ENCODE measurements at regions of chr6 and their contacts with region 1.

Region 1: DNA sequence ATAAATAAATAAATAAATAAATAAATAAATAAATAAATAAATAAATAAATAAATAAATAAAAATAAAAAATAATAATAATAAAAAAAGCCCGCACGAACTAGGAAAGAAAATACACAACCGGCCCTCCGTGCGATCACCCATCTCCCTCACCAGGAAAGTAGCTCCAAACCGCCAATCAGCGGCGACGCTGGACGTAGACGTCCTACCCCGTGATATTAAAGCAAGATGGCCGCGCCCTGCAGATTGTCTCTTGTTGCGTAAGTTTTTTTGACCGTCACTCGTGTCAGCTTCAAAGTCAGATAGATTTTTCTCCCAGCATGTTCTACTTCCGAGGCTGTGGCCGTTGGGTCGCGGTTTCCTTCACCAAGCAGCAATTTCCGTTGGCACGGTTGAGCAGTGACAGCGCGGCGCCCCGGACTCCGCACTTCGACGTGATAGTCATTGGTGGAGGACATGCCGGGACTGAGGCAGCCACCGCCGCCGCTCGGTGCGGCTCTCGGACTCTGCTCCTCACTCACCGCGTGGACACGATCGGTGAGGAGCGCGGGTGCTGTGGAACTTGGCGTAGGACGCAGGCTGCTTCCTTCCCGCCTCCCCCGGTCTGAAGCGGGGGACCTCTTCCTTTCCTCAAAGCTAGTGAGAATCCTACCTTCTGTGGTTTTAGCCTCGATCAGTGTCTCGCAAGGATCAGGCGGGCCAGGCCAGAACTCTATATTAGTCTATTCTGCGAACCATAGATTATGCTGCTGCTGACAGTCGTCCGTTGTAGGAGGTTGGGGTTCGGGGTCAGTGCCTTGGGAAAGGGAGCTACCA is at the start of gene MTO1:
- DNase-seq: peak; percentile 72 to 95 (median 80)
- ATAC-seq: peak; percentile 91
- H3K4me3 ChIP-seq: peak within 1 kb of the TSS; percentile 81
- H3K4me3 Mint-ChIP-seq: peak within 1 kb of the TSS; percentile 98
- H3K27ac ChIP-seq: peak within 1 kb of the TSS; percentile 88 to 95
- H3K27ac Mint-ChIP-seq: peak within 1 kb of the TSS; percentile 95
- H3K4me1 ChIP-seq: peaks cover 53% of the 10 kb centered on the region
- H3K4me1 Mint-ChIP-seq: peaks cover 47% of the 10 kb centered on the region
- H3K27me3 ChIP-seq: no peaks in the 10 kb centered on the region
- H3K27me3 Mint-ChIP-seq: no peaks in the 10 kb centered on the region
- CTCF ChIP-seq: no peak
- total RNA-seq, gene MTO1: 47.9 to 48.0 TPM

Region 2: DNA sequence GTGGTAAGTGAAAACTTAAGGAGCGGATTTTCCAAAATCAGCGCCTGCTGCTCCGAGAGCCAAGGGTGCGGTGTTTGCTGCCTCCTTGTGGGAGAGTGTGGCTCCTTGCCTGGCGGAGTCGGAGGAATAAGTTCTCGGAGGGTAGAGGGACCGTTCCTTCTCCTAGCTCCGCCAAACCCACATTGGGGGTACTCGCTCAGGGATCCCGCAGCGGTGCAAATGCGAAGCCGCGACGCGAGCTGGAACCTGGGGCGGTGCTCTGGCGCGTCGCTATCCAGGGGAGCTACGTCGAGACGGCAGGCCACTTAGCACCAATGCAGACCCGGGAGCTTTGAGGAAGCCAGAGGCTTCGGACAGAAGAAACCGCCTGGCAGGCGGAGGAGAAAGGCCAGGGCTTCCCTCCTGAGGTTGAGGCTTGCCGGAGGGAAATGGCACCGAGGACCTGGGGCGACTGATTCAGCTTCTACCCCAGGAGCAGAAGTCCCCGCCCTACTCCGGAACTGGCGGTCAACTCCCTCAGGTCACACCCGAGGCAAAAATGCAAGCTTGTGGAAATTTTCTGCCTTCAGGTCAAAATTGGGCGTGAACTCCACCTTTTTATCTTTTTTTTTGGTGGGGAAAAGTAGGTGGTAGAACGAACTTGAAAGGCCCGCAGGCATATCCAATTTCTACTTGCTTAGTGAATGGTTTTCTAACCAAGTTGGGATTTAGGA is 72.8 kb before region 1 on chr6:
- CTCF ChIA-PET with region 1: no interaction called
- POLR2A ChIA-PET with region 1: interaction called, 16 read pairs
- intact Hi-C with region 1: no loop called
- DNase-seq: peak in 13 of 14 experiments; percentile 11 to 81 (median 41)
- ATAC-seq: peak; percentile 71
- H3K4me3 ChIP-seq: peak overlapping the region; percentile 71
- H3K4me3 Mint-ChIP-seq: peak overlapping the region; percentile 82
- H3K27ac ChIP-seq: peak overlapping the region in 1 of 2 donors; percentile 59
- H3K27ac Mint-ChIP-seq: peak overlapping the region; percentile 77
- H3K4me1 ChIP-seq: peaks cover 23% of the 10 kb centered on the region
- H3K4me1 Mint-ChIP-seq: peaks cover 19% of the 10 kb centered on the region
- H3K27me3 ChIP-seq: no peaks in the 10 kb centered on the region
- H3K27me3 Mint-ChIP-seq: no peaks in the 10 kb centered on the region
- CTCF ChIP-seq: peak; percentile 48

Region 3: DNA sequence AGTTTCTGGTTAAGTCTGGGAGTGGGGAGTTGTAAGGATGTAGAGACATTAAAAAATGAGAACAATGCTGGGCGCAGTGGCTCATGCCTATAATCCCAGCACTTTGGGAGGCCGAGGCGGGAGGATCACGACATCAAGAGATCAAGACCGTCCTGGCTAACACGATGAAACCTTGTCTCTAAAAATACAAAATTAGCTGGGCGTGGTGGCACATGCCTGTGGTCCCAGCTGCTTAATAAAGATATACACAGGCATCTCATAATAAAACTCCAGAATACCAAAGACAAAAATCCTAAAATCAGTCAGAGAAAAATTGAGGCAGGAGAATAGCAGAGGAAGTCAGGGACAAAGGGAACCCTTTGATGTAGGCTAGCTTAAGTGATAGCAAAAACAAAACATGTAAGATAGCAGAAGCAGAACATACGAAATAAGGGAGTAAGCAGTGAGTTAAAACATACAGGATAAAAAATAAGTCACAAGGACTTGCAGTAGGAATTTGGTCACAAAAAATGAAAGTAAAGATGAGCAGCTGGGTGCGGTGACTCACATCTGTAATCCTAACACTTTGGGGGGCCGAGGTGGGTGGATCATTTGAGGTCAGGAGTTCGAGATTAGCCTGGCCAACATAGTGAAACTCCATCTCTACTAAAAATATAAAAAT is 43.5 kb before region 1 on chr6:
- CTCF ChIA-PET with region 1: no interaction called
- POLR2A ChIA-PET with region 1: interaction called, 13 read pairs
- intact Hi-C with region 1: no loop called
- DNase-seq: peak in 1 of 14 experiments; percentile 18
- ATAC-seq: no peak
- H3K4me3 ChIP-seq: no peak overlapping the region
- H3K4me3 Mint-ChIP-seq: no peak overlapping the region
- H3K27ac ChIP-seq: no peak overlapping the region
- H3K27ac Mint-ChIP-seq: peak overlapping the region; percentile 29
- H3K4me1 ChIP-seq: peaks cover 19% of the 10 kb centered on the region
- H3K4me1 Mint-ChIP-seq: peaks cover 20% of the 10 kb centered on the region
- H3K27me3 ChIP-seq: no peaks in the 10 kb centered on the region
- H3K27me3 Mint-ChIP-seq: no peaks in the 10 kb centered on the region
- CTCF ChIP-seq: no peak

Region 4: DNA sequence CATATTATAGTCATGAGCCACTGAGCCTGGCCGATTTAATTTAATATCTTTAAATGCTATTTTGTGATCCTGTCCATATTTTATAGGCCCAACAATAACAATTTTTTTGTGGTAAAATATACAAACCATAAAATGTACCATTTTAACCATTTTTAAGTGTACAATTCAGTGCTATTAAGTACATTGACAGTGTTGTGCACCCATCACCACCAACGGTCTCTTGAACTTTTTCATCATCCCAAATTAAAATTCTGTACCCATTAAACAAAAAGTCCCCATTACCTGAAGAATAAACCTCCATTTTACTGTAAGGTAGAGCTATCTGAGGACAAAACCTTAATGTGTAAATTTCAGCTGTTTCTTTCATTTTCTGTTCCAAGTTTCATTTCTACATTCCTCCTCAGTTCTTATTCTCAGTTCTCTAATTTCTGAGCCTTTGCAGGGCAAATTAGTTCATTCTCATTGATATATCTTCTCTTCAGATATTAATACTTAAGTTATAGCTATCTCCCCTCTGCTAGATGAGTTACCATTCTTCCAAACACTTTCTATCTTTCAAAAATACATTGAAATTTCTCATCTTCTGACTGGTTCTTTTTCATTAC is 10.0 kb after region 1 on chr6:
- CTCF ChIA-PET with region 1: no interaction called
- POLR2A ChIA-PET with region 1: interaction called, 19 read pairs
- intact Hi-C with region 1: no loop called
- DNase-seq: peak in 1 of 14 experiments; percentile 16
- ATAC-seq: no peak
- H3K4me3 ChIP-seq: no peak overlapping the region
- H3K4me3 Mint-ChIP-seq: no peak overlapping the region
- H3K27ac ChIP-seq: no peak overlapping the region
- H3K27ac Mint-ChIP-seq: no peak overlapping the region
- H3K4me1 ChIP-seq: peaks cover 8% of the 10 kb centered on the region
- H3K4me1 Mint-ChIP-seq: peaks cover 9% of the 10 kb centered on the region
- H3K27me3 ChIP-seq: no peaks in the 10 kb centered on the region
- H3K27me3 Mint-ChIP-seq: no peaks in the 10 kb centered on the region
- CTCF ChIP-seq: no peak

Region 5: DNA sequence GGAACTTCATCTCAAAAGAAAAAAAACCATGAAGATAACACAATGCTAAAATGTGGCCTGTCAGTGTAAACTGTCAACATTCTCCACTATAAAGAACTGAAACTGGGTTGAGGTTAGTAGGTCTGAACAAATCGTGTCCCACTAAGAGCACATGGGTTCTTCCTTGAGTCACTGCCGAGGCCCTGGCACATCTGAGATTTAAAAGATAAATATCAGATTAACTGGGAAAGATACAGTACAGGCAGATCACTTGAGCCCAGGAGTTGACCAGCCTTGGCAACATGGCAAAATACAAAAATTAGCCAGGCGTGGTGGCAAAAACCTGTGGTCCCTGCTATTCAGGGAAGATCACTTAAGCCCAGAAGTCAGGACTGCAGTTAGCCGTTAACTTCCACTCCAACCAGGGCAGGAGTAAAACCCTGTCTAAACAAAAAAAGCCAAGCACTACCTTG is 53.5 kb after region 1 on chr6:
- CTCF ChIA-PET with region 1: interaction called, 3 read pairs
- POLR2A ChIA-PET with region 1: interaction called, 88 read pairs
- intact Hi-C with region 1: loop called (anchors 2 to 5 kb)
- DNase-seq: peak in 3 of 14 experiments; percentile 28 to 48 (median 47)
- ATAC-seq: no peak
- H3K4me3 ChIP-seq: no peak overlapping the region
- H3K4me3 Mint-ChIP-seq: peak overlapping the region; percentile 81
- H3K27ac ChIP-seq: peak overlapping the region in 1 of 2 donors; percentile 16
- H3K27ac Mint-ChIP-seq: peak overlapping the region; percentile 87
- H3K4me1 ChIP-seq: peaks cover 47% of the 10 kb centered on the region
- H3K4me1 Mint-ChIP-seq: peaks cover 59% of the 10 kb centered on the region
- H3K27me3 ChIP-seq: no peaks in the 10 kb centered on the region
- H3K27me3 Mint-ChIP-seq: no peaks in the 10 kb centered on the region
- CTCF ChIP-seq: no peak

Region 6: GRCh38 chr6:73585566-73586415 is 124.0 kb after region 1 on chr6:
- CTCF ChIA-PET with region 1: interaction called, 6 read pairs
- POLR2A ChIA-PET with region 1: interaction called, 14 read pairs
- intact Hi-C with region 1: no loop called
- DNase-seq: peak in 8 of 14 experiments; percentile 6 to 87 (median 36)
- ATAC-seq: peak; percentile 86
- H3K4me3 ChIP-seq: peak overlapping the region; percentile 48
- H3K4me3 Mint-ChIP-seq: peak overlapping the region; percentile 75
- H3K27ac ChIP-seq: peak overlapping the region; percentile 89 to 93
- H3K27ac Mint-ChIP-seq: peak overlapping the region; percentile 98
- H3K4me1 ChIP-seq: peaks cover 15% of the 10 kb centered on the region
- H3K4me1 Mint-ChIP-seq: peaks cover 20% of the 10 kb centered on the region
- H3K27me3 ChIP-seq: no peaks in the 10 kb centered on the region
- H3K27me3 Mint-ChIP-seq: no peaks in the 10 kb centered on the region
- CTCF ChIP-seq: no peak

Region 7: GRCh38 chr6:75243333-75244062 is 1781.8 kb after region 1 on chr6 and contains the start of gene COX7A2:
- CTCF ChIA-PET with region 1: no interaction called
- POLR2A ChIA-PET with region 1: no interaction called
- intact Hi-C with region 1: loop called in 1 of 2 experiments (anchors 10 kb)
- DNase-seq: peak; percentile 73 to 96 (median 78)
- ATAC-seq: peak; percentile 95
- H3K4me3 ChIP-seq: peak within 1 kb of the TSS; percentile 88
- H3K4me3 Mint-ChIP-seq: peak within 1 kb of the TSS; percentile 99
- H3K27ac ChIP-seq: peak within 1 kb of the TSS; percentile 87 to 97
- H3K27ac Mint-ChIP-seq: peak within 1 kb of the TSS; percentile 95
- H3K4me1 ChIP-seq: peaks cover 24% of the 10 kb centered on the region
- H3K4me1 Mint-ChIP-seq: peaks cover 40% of the 10 kb centered on the region
- H3K27me3 ChIP-seq: no peaks in the 10 kb centered on the region
- H3K27me3 Mint-ChIP-seq: peaks cover 17% of the 10 kb centered on the region
- CTCF ChIP-seq: no peak
- total RNA-seq, gene COX7A2: 189 to 195 TPM

Measured in CD4-positive, alpha-beta T cell (primary cell).